Activated B cell treated with CpG ODN at 0.5 μM for 24 hours (primary cell): ENCODE measurements at regions of chrX and their contacts with region 1.

Region 1: DNA sequence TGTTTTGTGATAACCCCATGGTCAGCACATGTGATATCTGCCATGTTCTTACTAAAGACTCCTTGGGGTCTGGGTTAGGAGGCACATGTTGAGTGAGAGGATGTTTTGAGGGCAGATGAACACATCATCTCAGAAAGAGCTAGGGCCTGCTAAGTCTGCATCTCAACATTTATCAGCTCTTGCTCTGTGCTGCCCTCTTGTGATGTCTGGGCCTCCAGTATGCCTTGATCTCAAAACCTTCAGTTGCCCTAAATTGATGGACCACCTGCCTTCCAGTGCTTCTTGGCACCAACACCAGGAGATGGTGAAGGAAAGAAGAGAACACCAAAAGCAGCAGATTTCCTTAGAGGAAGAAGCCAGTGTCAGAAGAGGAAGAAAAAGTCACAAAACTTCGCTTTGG is 22.5 kb downstream of the MID1 start:
- DNase-seq: no peak
- ATAC-seq: peak; percentile 28
- H3K4me3 Mint-ChIP-seq: no peak overlapping the region
- H3K27ac Mint-ChIP-seq: no peak overlapping the region
- H3K4me1 Mint-ChIP-seq: no peaks in the 10 kb centered on the region
- H3K27me3 Mint-ChIP-seq: no peaks in the 10 kb centered on the region
- CTCF ChIP-seq: no peak

Region 2: DNA sequence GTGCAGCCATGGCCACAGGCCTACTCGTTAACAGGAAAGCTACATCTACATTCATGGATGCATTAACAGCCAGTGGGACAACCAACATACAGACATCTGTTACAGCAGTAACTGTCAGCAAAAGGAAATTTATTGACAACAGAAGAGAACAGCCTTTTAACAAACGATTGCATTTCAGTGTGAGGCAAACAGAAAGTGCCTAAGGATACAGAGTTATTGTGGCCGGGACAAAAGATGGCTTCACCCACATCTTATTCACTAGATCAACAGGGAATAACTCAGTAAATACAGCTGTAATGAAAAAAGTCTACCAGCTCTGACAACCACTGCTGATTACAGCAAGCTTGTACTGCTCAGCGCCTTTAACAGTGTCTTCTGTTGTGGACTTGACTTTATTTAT is 1194.5 kb before region 1 on chrX:
- CTCF ChIA-PET with region 1: no interaction called
- POLR2A ChIA-PET with region 1: no interaction called
- intact Hi-C with region 1: no loop called
- DNase-seq: no peak
- ATAC-seq: no peak
- H3K4me3 Mint-ChIP-seq: no peak overlapping the region
- H3K27ac Mint-ChIP-seq: no peak overlapping the region
- H3K4me1 Mint-ChIP-seq: no peaks in the 10 kb centered on the region
- H3K27me3 Mint-ChIP-seq: no peaks in the 10 kb centered on the region
- CTCF ChIP-seq: no peak

Region 3: DNA sequence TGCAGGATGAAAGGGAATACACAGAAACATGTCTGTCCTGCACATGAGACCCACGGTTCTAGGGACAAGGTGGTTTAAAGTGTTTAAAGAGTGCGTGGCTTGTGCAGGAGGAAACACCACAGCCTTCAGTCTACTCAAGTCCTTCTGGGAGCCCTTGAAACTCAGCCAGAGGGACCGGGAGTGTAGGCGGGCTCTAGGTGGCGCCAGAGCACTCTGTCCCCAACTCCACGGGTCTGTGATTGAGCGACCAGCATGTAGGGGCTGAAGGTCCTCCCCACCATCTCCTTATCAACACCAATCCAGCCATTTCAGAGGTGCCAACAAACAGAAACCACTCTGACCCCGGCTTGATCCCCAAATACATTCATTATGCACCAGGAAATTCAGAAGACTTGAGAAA is 712.7 kb before region 1 on chrX:
- CTCF ChIA-PET with region 1: no interaction called
- POLR2A ChIA-PET with region 1: no interaction called
- intact Hi-C with region 1: loop called (anchors 10 kb)
- DNase-seq: peak; percentile 35
- ATAC-seq: peak; percentile 85
- H3K4me3 Mint-ChIP-seq: no peak overlapping the region
- H3K27ac Mint-ChIP-seq: no peak overlapping the region
- H3K4me1 Mint-ChIP-seq: peaks cover 2% of the 10 kb centered on the region
- H3K27me3 Mint-ChIP-seq: peaks cover 3% of the 10 kb centered on the region
- CTCF ChIP-seq: no peak

Region 4: GRCh38 chrX:10722851-10723250 is 125.0 kb after region 1 on chrX:
- CTCF ChIA-PET with region 1: interaction called, 3 read pairs
- POLR2A ChIA-PET with region 1: no interaction called
- intact Hi-C with region 1: loop called (anchors 2 kb)
- DNase-seq: no peak
- ATAC-seq: peak; percentile 61
- H3K4me3 Mint-ChIP-seq: no peak overlapping the region
- H3K27ac Mint-ChIP-seq: no peak overlapping the region
- H3K4me1 Mint-ChIP-seq: no peaks in the 10 kb centered on the region
- H3K27me3 Mint-ChIP-seq: no peaks in the 10 kb centered on the region
- CTCF ChIP-seq: no peak

Region 5: DNA sequence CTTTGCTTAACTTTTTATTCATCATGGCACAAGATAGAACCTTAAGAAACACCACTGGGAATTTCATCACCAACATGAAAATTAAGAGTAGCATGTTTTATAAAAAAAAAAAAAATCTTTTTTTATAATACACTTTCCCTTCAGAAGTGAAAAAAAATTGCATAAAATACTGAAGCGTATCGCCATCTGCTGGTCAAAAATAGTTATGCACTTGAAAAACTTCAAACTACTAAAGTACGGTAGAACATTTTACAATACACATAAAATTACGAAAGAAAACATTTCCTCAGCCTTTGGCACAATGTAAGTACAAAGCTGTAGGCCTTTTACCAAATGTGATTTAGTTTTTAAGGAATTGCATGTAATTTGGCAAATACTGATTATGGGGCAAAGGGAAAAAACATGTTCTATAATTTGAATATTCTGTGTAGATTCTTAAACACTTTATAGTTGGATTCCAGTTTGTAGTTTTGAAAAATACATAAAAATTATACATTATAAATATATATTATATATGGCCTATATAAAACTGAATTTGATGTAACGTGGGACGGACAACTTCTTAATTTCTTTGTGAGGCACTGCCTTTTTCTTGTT is 539.8 kb after region 1 on chrX:
- CTCF ChIA-PET with region 1: interaction called, 3 read pairs
- POLR2A ChIA-PET with region 1: no interaction called
- intact Hi-C with region 1: loop called (anchors 2 kb)
- DNase-seq: no peak
- ATAC-seq: no peak
- H3K4me3 Mint-ChIP-seq: no peak overlapping the region
- H3K27ac Mint-ChIP-seq: no peak overlapping the region
- H3K4me1 Mint-ChIP-seq: no peaks in the 10 kb centered on the region
- H3K27me3 Mint-ChIP-seq: no peaks in the 10 kb centered on the region
- CTCF ChIP-seq: no peak